ENCODE measurements at regions of chr21 and their contacts with region 1.

Region 1: GRCh38 chr21:44958471-44959191 is 18.8 kb downstream of the SLX9 start:
- DNase-seq: peak; percentile 89 to 94
- ATAC-seq: peak; percentile 41 to 75 (median 46)
- H3K4me3 ChIP-seq: peak overlapping the region; percentile 18
- H3K27ac ChIP-seq: peak overlapping the region; percentile 44
- H3K4me1 ChIP-seq: peaks cover 58% of the 10 kb centered on the region
- H3K27me3 ChIP-seq: no peaks in the 10 kb centered on the region
- CTCF ChIP-seq: no peak

Region 2: GRCh38 chr21:45033791-45034555 is 75.3 kb after region 1 on chr21:
- intact Hi-C with region 1: loop called in 1 of 2 experiments (anchors 5 kb)
- DNase-seq: peak; percentile 66 to 83
- ATAC-seq: peak; percentile 85 to 88 (median 87)
- H3K4me3 ChIP-seq: peak overlapping the region; percentile 33
- H3K27ac ChIP-seq: peak overlapping the region; percentile 74
- H3K4me1 ChIP-seq: peaks cover 23% of the 10 kb centered on the region
- H3K27me3 ChIP-seq: no peaks in the 10 kb centered on the region
- CTCF ChIP-seq: no peak

Measured in psoas muscle (tissue), 8 donors.